Natural killer cell (primary cell): ENCODE measurements at regions of chr7 and their contacts with region 1.

Region 1: DNA sequence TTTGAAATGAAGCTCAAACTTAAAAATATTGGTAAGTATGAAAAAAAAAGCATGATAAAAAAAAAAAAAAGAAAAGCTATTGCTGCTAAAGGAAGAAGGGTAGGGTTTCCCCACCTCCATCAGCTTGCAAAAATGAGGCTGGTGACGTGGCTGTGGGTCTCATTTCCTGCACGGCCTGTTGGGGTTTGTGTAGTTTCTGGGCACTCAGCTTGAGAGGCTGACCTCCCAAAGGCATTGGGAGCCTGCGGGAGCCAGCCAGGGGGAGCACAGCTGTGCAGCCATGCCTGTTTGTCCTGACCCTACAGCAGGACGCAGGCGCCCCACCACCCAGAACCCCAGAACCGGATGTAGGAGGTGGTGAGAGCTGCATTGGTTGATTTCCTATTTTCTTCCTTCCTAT is 48.8 kb upstream of the CARD11 start:
- DNase-seq: peak; percentile 74 to 92
- ATAC-seq: peak; percentile 83 to 88 (median 86)
- H3K4me3 ChIP-seq: no peak overlapping the region
- H3K4me3 Mint-ChIP-seq: peak overlapping the region; percentile 85
- H3K27ac ChIP-seq: peak overlapping the region; percentile 95
- H3K27ac Mint-ChIP-seq: peak overlapping the region; percentile 95 to 100
- H3K4me1 ChIP-seq: peaks cover 77% of the 10 kb centered on the region
- H3K4me1 Mint-ChIP-seq: peaks cover 61 to 68% of the 10 kb centered on the region in 2 donors
- H3K27me3 ChIP-seq: no peaks in the 10 kb centered on the region
- H3K27me3 Mint-ChIP-seq: no peaks in the 10 kb centered on the region
- CTCF ChIP-seq: no peak

Region 2: GRCh38 chr7:2420216-2420933 is 672.1 kb before region 1 on chr7:
- intact Hi-C with region 1: no loop called
- DNase-seq: no peak
- ATAC-seq: no peak
- H3K4me3 ChIP-seq: no peak overlapping the region
- H3K4me3 Mint-ChIP-seq: peak overlapping the region; percentile 45
- H3K27ac ChIP-seq: no peak overlapping the region
- H3K27ac Mint-ChIP-seq: peak overlapping the region in 1 of 2 donors; percentile 93
- H3K4me1 ChIP-seq: peaks cover 89% of the 10 kb centered on the region
- H3K4me1 Mint-ChIP-seq: peaks cover 52 to 66% of the 10 kb centered on the region in 2 donors
- H3K27me3 ChIP-seq: no peaks in the 10 kb centered on the region
- H3K27me3 Mint-ChIP-seq: no peaks in the 10 kb centered on the region
- CTCF ChIP-seq: no peak

Region 3: DNA sequence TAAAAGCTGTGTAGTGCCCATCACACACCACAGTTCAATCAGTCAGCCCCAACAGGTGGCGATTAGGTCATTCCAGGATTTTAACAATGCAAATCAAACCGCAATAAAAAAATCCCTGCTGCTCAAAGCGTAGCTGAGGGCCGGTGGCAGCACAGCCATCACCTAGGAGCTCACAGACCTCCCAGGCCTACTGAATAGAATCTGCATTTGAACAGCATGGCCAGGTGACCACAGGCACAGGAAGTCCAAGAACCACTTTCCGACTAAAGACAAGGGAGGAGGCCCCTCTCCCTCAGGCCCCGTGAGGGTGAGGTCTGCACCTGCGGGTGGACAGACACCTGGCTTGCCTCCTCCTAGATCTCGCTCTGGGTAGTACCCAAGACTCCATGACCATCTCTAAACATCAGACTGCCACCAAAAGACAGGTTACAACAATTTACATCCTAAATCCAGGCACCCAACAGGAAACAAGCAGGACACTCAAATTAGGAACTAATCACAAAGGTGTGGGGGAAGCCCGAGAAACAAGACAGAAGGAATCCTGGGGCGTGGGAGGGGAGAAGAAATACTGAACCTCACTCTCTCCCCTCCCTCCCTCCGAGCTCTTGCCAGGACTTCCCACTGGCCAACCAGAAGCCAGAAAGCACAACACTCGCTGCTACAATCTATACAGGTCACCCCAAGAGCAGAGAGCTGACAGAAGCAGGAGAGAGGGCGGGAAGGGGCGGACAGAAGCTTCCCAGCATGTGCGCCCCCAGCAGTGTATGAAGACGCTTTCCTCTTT is 267.6 kb before region 1 on chr7:
- intact Hi-C with region 1: no loop called
- DNase-seq: no peak
- ATAC-seq: no peak
- H3K4me3 ChIP-seq: no peak overlapping the region
- H3K4me3 Mint-ChIP-seq: no peak overlapping the region
- H3K27ac ChIP-seq: no peak overlapping the region
- H3K27ac Mint-ChIP-seq: peak overlapping the region in 1 of 2 donors; percentile 35
- H3K4me1 ChIP-seq: peaks cover 14% of the 10 kb centered on the region
- H3K4me1 Mint-ChIP-seq: peaks cover 24 to 26% of the 10 kb centered on the region in 2 donors
- H3K27me3 ChIP-seq: no peaks in the 10 kb centered on the region
- H3K27me3 Mint-ChIP-seq: no peaks in the 10 kb centered on the region
- CTCF ChIP-seq: no peak

Region 4: GRCh38 chr7:3033581-3033980 is 58.9 kb before region 1 on chr7:
- intact Hi-C with region 1: no loop called
- DNase-seq: no peak
- ATAC-seq: no peak
- H3K4me3 ChIP-seq: no peak overlapping the region
- H3K4me3 Mint-ChIP-seq: peak overlapping the region; percentile 6
- H3K27ac ChIP-seq: no peak overlapping the region
- H3K27ac Mint-ChIP-seq: peak overlapping the region; percentile 78 to 79
- H3K4me1 ChIP-seq: peaks cover 54% of the 10 kb centered on the region
- H3K4me1 Mint-ChIP-seq: peaks cover 49 to 75% of the 10 kb centered on the region in 2 donors
- H3K27me3 ChIP-seq: no peaks in the 10 kb centered on the region
- H3K27me3 Mint-ChIP-seq: no peaks in the 10 kb centered on the region
- CTCF ChIP-seq: no peak

Region 5: GRCh38 chr7:3146571-3147226 is 54.2 kb after region 1 on chr7:
- intact Hi-C with region 1: loop called (anchors 1 kb)
- DNase-seq: peak in 1 of 2 donors; percentile 37
- ATAC-seq: peak; percentile 67 to 86 (median 86)
- H3K4me3 ChIP-seq: no peak overlapping the region
- H3K4me3 Mint-ChIP-seq: peak overlapping the region; percentile 73
- H3K27ac ChIP-seq: no peak overlapping the region
- H3K27ac Mint-ChIP-seq: peak overlapping the region; percentile 65 to 68
- H3K4me1 ChIP-seq: peaks cover 26% of the 10 kb centered on the region
- H3K4me1 Mint-ChIP-seq: peaks cover 23 to 24% of the 10 kb centered on the region in 2 donors
- H3K27me3 ChIP-seq: no peaks in the 10 kb centered on the region
- H3K27me3 Mint-ChIP-seq: no peaks in the 10 kb centered on the region
- CTCF ChIP-seq: no peak